K562 (cell line): ENCODE measurements at regions of chr14 and their contacts with region 1.

Region 1: GRCh38 chr14:105562713-105563346 is 36.4 kb downstream of the TMEM121 start:
- DNase-seq: no peak
- ATAC-seq: no peak
- H3K4me3 ChIP-seq: no peak overlapping the region
- H3K27ac ChIP-seq: no peak overlapping the region
- H3K4me1 ChIP-seq: no peaks in the 10 kb centered on the region
- H3K27me3 ChIP-seq: no peaks in the 10 kb centered on the region
- CTCF ChIP-seq: no peak
- EP300 ChIP-seq: no peak
- POLR2A ChIP-seq: no peak
- RAD21 ChIP-seq: no peak

Region 2: DNA sequence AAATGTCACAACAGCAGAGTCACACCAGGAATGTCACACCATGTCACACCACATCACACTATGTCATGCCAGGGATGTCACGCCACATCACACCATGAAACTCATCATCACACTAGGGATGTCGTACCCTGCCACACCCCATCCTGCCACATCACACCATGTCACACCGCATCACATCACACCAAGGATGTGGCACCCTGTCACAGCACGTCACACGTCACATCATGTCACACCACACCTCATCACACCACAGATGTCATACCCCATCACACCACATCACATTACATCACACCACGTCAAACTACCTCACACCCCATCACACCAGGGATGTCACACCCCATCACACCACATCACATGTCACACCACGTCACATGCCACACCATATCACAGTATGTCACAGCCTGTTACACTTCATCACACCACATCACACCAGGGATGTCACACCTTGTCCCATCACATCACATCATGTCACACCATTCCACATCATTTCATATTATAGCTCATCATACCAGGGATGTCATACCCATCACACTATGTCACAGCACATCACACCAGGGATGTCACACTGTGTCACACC is 54.5 kb after region 1 on chr14:
- CTCF ChIA-PET with region 1: no interaction called
- POLR2A ChIA-PET with region 1: no interaction called
- in situ Hi-C with region 1: no loop called
- intact Hi-C with region 1: no loop called
- DNase-seq: no peak
- ATAC-seq: no peak
- H3K4me3 ChIP-seq: no peak overlapping the region
- H3K27ac ChIP-seq: no peak overlapping the region
- H3K4me1 ChIP-seq: no peaks in the 10 kb centered on the region
- H3K27me3 ChIP-seq: no peaks in the 10 kb centered on the region
- CTCF ChIP-seq: no peak
- EP300 ChIP-seq: no peak
- POLR2A ChIP-seq: no peak
- RAD21 ChIP-seq: no peak

Region 3: GRCh38 chr14:105682940-105683570 is 120.2 kb after region 1 on chr14:
- CTCF ChIA-PET with region 1: no interaction called
- POLR2A ChIA-PET with region 1: no interaction called
- in situ Hi-C with region 1: loop called (anchors 5 kb)
- intact Hi-C with region 1: no loop called
- DNase-seq: no peak
- ATAC-seq: no peak
- H3K4me3 ChIP-seq: no peak overlapping the region
- H3K27ac ChIP-seq: no peak overlapping the region
- H3K4me1 ChIP-seq: no peaks in the 10 kb centered on the region; a peak in 1 of 5 replicates
- H3K27me3 ChIP-seq: no peaks in the 10 kb centered on the region
- CTCF ChIP-seq: no peak
- EP300 ChIP-seq: no peak
- POLR2A ChIP-seq: no peak
- RAD21 ChIP-seq: no peak